ENCODE measurements at regions of chr9 and their contacts with region 1.

Region 1: GRCh38 chr9:98263482-98264357 is 8.3 kb upstream of the TBC1D2 start:
- DNase-seq: peak; percentile 78 to 89
- ATAC-seq: peak; percentile 82 to 99 (median 92)
- H3K4me3 ChIP-seq: no peak overlapping the region
- H3K27ac ChIP-seq: no peak overlapping the region
- H3K4me1 ChIP-seq: no peaks in the 10 kb centered on the region
- H3K27me3 ChIP-seq: no peaks in the 10 kb centered on the region
- CTCF ChIP-seq: peak; percentile 92

Region 2: GRCh38 chr9:97728256-97728655 is 535.5 kb before region 1 on chr9:
- intact Hi-C with region 1: no loop called
- DNase-seq: no peak
- ATAC-seq: no peak
- H3K4me3 ChIP-seq: no peak overlapping the region
- H3K27ac ChIP-seq: no peak overlapping the region
- H3K4me1 ChIP-seq: no peaks in the 10 kb centered on the region
- H3K27me3 ChIP-seq: peaks cover 0 to 6% (median 5%) of the 10 kb centered on the region in 3 donors
- CTCF ChIP-seq: no peak

Region 3: DNA sequence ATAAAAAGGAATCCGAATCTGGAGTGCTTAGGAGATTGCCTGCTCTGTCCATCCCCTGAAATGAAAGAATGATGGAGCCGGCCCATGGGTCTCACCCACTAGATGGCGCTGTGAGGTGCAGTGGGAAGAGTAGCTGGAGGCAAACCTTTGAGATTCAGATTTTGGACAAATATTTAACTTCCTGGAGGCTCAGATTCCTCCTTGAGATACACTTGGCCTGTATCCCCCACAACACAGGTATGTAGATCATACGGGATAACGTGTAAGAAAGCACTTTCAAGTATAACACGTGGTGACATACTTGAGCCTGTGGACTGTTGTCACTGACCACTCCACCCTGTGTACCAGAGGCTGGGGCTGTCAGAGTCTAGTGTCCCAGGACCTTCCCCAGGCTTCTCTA is 373.7 kb before region 1 on chr9:
- intact Hi-C with region 1: no loop called
- DNase-seq: no peak
- ATAC-seq: no peak
- H3K4me3 ChIP-seq: no peak overlapping the region
- H3K27ac ChIP-seq: no peak overlapping the region
- H3K4me1 ChIP-seq: no peaks in the 10 kb centered on the region
- H3K27me3 ChIP-seq: no peaks in the 10 kb centered on the region
- CTCF ChIP-seq: peak; percentile 32

Region 4: GRCh38 chr9:98074115-98074990 is 189.4 kb before region 1 on chr9:
- intact Hi-C with region 1: loop called (anchors 2 to 10 kb)
- DNase-seq: peak; percentile 50 to 74
- ATAC-seq: peak in 3 of 4 donors; percentile 53 to 76 (median 67)
- H3K4me3 ChIP-seq: no peak overlapping the region
- H3K27ac ChIP-seq: no peak overlapping the region
- H3K4me1 ChIP-seq: no peaks in the 10 kb centered on the region
- H3K27me3 ChIP-seq: no peaks in the 10 kb centered on the region
- CTCF ChIP-seq: peak; percentile 88

Region 5: DNA sequence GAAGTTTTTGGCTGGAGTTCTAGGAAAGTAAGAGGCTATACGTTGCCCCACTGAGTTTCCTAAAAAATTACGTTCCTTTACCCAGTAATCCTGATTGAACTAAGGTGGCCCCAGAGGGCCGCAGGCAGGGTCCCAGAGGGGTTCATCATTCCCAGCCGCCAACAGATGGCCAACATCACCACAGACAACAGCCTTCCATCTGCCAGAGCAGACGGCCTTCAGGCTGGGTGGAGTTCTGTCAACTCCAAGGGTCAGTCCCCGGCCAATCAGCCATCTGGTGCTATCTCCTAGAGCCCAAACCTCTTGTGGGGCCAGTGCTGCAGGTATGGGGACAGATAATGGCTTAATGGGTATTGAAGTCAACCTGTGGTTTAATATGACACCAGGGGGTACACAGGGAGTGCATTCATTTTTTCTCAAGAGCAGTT is 38.7 kb before region 1 on chr9:
- intact Hi-C with region 1: loop called in 1 of 2 experiments (anchors 5 kb)
- DNase-seq: no peak
- ATAC-seq: no peak
- H3K4me3 ChIP-seq: no peak overlapping the region
- H3K27ac ChIP-seq: no peak overlapping the region
- H3K4me1 ChIP-seq: peaks cover 18% of the 10 kb centered on the region
- H3K27me3 ChIP-seq: no peaks in the 10 kb centered on the region
- CTCF ChIP-seq: no peak

Region 6: DNA sequence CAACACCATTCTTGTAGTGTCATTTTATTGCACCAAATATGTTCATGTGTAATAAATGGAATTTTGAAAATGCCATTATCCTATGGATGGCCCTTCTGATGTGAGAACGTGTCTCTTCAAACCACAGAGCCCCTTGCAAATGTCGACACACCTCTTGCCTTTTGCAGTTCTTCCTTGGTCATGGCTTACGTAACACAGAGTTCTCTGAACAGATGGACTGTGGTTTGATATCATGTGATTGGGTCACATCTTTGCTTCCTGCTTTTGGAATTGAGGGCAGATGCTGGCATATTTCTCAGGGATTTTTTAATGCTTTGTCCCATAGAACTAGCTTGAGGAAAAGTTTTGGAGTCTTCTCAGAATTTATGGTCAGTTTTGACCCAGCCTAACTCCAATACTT is 845.8 kb after region 1 on chr9:
- intact Hi-C with region 1: no loop called
- DNase-seq: no peak
- ATAC-seq: no peak
- H3K4me3 ChIP-seq: no peak overlapping the region
- H3K27ac ChIP-seq: peak overlapping the region; percentile 50
- H3K4me1 ChIP-seq: peaks cover 76% of the 10 kb centered on the region
- H3K27me3 ChIP-seq: no peaks in the 10 kb centered on the region
- CTCF ChIP-seq: no peak